Activated T-helper 2 cell treated with anti-CD3 and anti-CD28 coated beads, Interferon-gamma antibody, Interleukin-2, Interleukin-4, amounts not matched to agents 10 μg/mL and 5 μg/mL and 100 μg/mL, durations not matched to agents 14 hours and 24 hours and 36 hours (primary cell): ENCODE measurements at regions of chr5 and their contacts with region 1.

Region 1: DNA sequence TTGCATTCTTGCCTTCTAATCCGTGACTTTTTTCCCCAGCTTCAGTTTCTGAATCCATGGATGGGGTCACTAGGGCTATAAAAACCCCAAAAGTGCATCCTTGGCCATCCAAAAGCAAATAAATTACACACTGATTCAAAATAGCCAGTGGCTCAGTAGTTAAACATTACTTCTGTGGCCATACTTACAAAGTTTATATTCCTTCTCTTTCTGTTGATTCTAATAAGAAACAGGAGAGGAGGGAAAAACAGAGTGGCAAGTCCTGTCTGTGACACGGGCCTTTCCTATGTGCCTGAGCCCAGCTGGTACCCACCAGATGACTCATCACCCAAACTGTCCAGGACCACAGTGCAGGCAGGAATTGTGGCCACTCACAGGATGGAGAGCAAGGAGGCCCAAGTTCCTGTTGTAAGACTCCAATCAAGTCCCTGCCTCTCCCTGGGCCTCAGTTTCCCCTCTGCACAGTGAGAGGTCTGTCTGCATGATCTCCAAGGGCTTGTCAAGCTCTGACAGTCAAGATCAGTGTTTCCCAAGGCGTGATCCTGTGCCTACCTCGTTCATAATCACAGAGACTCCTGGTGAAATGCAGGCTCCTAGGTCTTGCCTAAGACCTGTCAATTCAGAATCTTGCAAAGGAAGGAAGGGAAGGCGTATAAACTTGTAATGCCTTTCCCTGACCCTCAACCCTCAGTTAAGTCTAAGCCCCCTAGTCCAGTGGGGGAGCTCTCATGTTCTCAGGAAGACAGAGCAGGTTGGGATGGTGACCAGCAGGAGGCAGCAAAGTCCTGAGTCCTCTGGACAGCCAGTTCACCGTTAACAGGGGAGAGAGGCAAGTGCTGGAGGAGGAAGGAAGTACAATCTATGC is 29.5 kb downstream of the TNIP1 start:
- DNase-seq: peak; percentile 55
- H3K4me3 Mint-ChIP-seq: no peak overlapping the region
- H3K27ac Mint-ChIP-seq: peak overlapping the region; percentile 34
- H3K4me1 Mint-ChIP-seq: peaks cover 15% of the 10 kb centered on the region
- H3K27me3 Mint-ChIP-seq: no peaks in the 10 kb centered on the region

Region 2: GRCh38 chr5:151086905-151087360 is 35.6 kb after region 1 on chr5:
- intact Hi-C with region 1: loop called (anchors 2 kb)
- DNase-seq: peak; percentile 49
- H3K4me3 Mint-ChIP-seq: peak overlapping the region; percentile 99
- H3K27ac Mint-ChIP-seq: peak overlapping the region; percentile 78
- H3K4me1 Mint-ChIP-seq: peaks cover 60% of the 10 kb centered on the region
- H3K27me3 Mint-ChIP-seq: no peaks in the 10 kb centered on the region

Region 3: GRCh38 chr5:151115274-151115905 is 64.1 kb after region 1 on chr5:
- intact Hi-C with region 1: loop called (anchors 1 kb)
- DNase-seq: peak; percentile 51
- H3K4me3 Mint-ChIP-seq: no peak overlapping the region
- H3K27ac Mint-ChIP-seq: no peak overlapping the region
- H3K4me1 Mint-ChIP-seq: peaks cover 2% of the 10 kb centered on the region
- H3K27me3 Mint-ChIP-seq: no peaks in the 10 kb centered on the region

Region 4: DNA sequence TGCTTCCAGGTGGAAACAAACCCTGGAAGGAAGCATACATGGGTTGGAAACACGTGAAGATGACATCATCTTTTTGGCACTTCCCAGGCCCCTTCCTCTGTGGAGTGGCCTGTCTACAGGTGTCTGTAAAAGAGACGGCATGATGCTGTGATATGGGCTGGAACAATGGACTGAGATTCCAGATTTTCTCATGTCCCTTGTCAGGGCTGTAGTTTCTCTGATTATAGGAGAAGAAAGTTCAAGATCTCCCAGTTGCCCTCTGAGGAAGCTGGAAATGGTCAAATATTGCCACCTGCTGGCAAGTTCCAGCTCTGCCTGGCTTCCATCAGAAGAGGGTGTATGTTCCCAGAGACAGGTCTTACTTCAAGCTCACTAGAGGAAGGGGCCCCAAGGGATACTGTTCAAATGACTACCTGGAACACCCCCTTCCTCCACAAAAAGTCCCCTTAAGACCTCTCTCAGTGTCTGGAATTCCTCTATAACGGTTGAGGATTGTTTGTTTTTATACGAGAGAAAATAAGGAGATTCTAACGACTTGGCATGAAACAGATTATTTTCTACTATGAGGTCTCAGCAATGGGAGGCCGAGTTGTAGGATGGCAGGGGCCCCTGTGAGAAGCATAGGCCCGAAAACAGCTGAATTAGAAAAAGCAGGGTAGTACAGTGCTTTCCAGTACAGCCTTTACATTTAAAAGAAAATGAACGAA is 113.5 kb after region 1 on chr5:
- intact Hi-C with region 1: loop called (anchors 1 kb)
- DNase-seq: peak; percentile 69
- H3K4me3 Mint-ChIP-seq: no peak overlapping the region
- H3K27ac Mint-ChIP-seq: no peak overlapping the region
- H3K4me1 Mint-ChIP-seq: peaks cover 6% of the 10 kb centered on the region
- H3K27me3 Mint-ChIP-seq: peaks cover 2% of the 10 kb centered on the region

Region 5: DNA sequence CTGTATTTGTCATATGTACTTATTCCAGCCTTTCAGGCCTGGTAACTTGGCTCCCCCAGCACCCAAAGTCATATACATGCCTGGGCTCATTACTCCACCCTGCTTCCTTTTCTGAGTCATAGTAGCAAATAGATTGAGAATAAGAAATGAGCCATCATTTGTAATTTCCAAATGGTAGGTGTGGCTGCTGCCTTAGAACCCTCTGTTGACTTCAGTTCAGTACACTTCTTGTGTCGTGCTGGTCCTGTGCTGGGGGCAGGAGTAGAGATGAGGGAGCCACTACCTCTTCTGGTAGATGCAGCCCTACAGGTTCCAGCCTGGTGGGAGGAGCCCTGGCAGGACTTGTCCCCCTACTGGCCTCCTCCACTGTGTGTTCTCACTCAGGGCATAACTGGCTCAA is 212.8 kb after region 1 on chr5:
- intact Hi-C with region 1: no loop called
- DNase-seq: no peak
- H3K4me3 Mint-ChIP-seq: no peak overlapping the region
- H3K27ac Mint-ChIP-seq: peak overlapping the region; percentile 75
- H3K4me1 Mint-ChIP-seq: peaks cover 12% of the 10 kb centered on the region
- H3K27me3 Mint-ChIP-seq: no peaks in the 10 kb centered on the region

Region 6: DNA sequence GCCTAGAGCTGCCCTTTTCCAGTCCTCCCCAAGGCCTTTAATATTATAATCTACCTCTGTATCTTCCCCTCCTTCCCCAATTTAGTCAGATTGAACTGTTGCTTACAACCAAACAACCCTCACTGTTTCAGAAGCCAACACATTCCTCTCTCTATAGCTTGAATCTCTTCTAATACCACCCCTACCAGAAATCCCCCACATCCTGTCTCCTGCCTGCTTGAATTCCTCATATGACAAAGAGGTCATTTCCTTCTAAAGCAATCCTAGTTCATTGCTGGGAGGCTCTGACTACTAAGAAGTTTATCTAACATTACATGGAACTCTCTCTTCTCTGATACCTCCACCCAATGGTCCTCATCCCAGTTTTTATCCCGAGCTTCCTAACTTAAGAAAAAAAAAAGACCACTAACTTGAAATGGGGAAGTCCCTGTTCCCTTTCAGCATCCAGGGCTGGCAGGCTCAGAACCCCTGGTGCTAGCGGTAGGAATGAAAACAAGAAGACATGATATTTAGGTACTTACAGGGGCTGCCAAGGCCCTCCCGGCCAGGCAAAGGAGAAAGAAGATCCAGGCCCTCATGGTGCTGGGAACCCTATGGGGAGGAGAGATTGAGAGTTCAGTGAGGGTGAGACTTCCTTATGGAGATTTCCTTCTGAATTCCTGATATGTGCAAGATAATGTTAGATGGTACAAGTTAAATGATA is 624.5 kb after region 1 on chr5:
- intact Hi-C with region 1: no loop called
- DNase-seq: no peak
- H3K4me3 Mint-ChIP-seq: no peak overlapping the region
- H3K27ac Mint-ChIP-seq: no peak overlapping the region
- H3K4me1 Mint-ChIP-seq: peaks cover 3% of the 10 kb centered on the region
- H3K27me3 Mint-ChIP-seq: peaks cover 6% of the 10 kb centered on the region

Region 7: DNA sequence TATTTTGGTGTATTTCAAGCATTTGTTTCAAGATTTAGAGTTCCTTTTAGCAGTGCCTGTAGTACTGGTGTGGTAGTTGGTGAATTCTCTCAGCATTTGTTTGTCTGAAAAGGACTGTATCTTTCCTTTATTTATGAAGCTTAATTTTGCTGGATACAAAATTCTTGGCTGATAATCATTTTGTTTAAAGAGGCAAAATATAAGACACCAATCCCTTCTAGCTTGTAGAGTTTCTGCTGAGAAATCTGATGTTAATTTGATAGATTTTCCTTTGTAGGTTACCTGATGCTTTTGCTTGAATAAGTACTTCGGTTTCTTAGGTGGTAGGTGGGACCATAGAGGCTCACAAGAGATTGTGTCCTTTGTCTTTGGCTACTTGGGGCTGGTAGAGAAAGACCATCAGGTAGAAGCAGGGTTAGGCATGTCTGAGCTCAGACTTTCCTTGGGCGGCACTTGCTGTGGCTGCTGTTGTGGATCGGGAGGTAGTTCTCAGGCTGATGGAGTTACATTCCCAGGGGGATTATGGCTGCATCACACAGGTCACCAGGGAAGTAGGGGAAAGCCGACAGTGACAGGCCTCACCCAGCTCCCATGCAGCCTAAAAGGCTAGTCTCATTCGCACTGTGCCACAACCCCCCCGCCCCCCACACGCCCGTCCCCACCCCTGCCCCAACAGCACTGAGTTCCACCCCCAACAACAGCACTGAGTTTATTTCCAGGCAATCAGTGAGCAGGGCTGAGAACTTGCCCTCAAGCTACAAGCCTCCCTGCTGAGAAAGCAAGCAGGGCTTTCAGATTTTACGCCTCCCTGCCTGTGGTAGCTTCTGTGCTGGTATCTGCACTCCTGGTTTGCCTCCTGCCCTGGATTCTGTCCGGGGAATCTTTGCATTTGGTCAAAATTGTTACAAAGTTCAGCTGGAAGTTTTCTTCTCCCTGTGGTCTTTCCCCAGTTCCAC is 1000.5 kb after region 1 on chr5:
- intact Hi-C with region 1: no loop called
- DNase-seq: no peak
- H3K4me3 Mint-ChIP-seq: no peak overlapping the region
- H3K27ac Mint-ChIP-seq: no peak overlapping the region
- H3K4me1 Mint-ChIP-seq: no peaks in the 10 kb centered on the region
- H3K27me3 Mint-ChIP-seq: no peaks in the 10 kb centered on the region